ENCODE measurements at regions of chr7 and their contacts with region 1.

Region 1: GRCh38 chr7:111741811-111742240 is 179.5 kb upstream of the IMMP2L start:
- DNase-seq: peak; percentile 24
- H3K4me3 Mint-ChIP-seq: no peak overlapping the region
- H3K27ac Mint-ChIP-seq: no peak overlapping the region
- H3K4me1 Mint-ChIP-seq: no peaks in the 10 kb centered on the region
- H3K27me3 Mint-ChIP-seq: no peaks in the 10 kb centered on the region

Region 2: DNA sequence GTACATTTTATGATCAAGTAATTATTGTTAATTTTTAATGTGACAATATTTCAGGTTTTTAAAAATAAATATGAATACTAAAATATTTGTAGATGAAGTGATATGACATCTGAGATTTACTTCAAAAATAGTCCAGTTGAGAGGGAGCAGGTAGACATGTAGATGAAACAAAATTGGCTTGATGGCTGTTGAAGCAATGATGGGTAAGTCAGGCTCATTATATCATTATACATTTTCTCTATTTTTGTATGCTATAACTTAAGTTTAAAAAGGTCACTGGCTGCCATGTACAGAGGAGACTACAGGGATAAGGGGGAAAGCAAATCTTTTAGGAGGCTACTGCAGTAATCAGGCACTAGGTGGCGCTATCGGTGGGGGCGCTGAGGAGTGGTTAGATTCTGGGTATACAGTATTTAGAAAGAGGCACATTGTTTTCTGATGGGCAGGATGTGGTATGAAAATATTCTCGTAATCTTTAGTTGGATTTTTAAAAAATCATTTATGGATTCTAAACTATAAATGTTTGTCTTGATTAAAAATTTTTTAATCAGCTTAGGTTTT is 10.3 kb after region 1 on chr7:
- CTCF ChIA-PET with region 1: interaction called, 12 read pairs
- POLR2A ChIA-PET with region 1: no interaction called
- DNase-seq: peak; percentile 67
- H3K4me3 Mint-ChIP-seq: no peak overlapping the region
- H3K27ac Mint-ChIP-seq: no peak overlapping the region
- H3K4me1 Mint-ChIP-seq: no peaks in the 10 kb centered on the region
- H3K27me3 Mint-ChIP-seq: peaks cover 10% of the 10 kb centered on the region

Region 3: GRCh38 chr7:111813306-111813705 is 71.5 kb after region 1 on chr7:
- CTCF ChIA-PET with region 1: no interaction called
- POLR2A ChIA-PET with region 1: no interaction called
- DNase-seq: no peak
- H3K4me3 Mint-ChIP-seq: no peak overlapping the region
- H3K27ac Mint-ChIP-seq: no peak overlapping the region
- H3K4me1 Mint-ChIP-seq: no peaks in the 10 kb centered on the region
- H3K27me3 Mint-ChIP-seq: no peaks in the 10 kb centered on the region

Region 4: GRCh38 chr7:112407261-112407660 is 665.4 kb after region 1 on chr7:
- CTCF ChIA-PET with region 1: no interaction called
- POLR2A ChIA-PET with region 1: no interaction called
- DNase-seq: no peak
- H3K4me3 Mint-ChIP-seq: no peak overlapping the region
- H3K27ac Mint-ChIP-seq: no peak overlapping the region
- H3K4me1 Mint-ChIP-seq: no peaks in the 10 kb centered on the region
- H3K27me3 Mint-ChIP-seq: peaks cover 18% of the 10 kb centered on the region